K562 (cell line): ENCODE measurements at regions of chr21 and their contacts with region 1.

Region 1: DNA sequence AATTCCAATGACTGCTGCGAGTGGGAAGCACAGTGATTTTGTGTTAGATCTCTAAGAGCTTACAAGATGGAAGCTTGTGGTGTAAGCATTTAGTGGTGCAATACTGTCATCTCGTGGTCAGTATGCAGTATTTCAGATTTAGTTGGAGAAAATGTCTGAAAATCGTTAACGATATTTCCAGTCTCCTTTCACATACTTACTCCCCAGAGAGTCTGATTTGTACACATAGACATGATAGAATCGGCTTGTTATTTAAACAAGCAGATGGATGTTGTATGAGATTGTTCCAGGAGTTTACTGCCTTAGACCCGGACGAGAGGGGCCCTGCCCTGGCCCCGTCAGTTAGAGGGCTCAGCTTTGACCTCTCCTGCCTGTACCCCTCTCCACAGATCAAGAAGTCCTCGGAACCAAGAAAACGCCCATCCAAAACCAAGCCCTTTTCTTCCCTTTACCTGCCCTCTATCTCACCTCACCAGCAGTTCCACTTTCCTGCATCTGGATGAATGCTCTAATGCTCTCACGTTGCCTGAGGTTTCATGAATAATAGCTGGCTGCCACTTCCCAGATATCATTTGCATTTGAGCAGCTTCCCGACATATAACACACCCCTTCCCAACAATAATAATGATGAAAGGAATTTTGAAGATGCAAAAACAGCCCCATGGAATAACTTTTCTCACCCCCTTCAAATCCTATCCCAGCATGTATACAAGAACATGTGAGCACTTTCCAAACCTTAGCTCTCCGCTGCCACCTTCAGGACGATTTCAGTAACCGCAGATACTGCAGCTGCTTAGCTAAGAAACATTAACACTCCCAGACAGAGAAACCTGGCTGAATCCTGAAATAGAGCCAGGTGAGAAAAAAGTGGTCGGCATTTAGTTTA is 247.3 kb downstream of the LTN1 start:
- DNase-seq: peak; percentile 65 to 82 (median 78)
- ATAC-seq: peak; percentile 97
- H3K4me3 ChIP-seq: no peak overlapping the region
- H3K27ac ChIP-seq: no peak overlapping the region
- H3K4me1 ChIP-seq: no peaks in the 10 kb centered on the region
- H3K27me3 ChIP-seq: no peaks in the 10 kb centered on the region
- CTCF ChIP-seq: peak; percentile 84 to 99 (median 91)
- EP300 ChIP-seq: no peak
- POLR2A ChIP-seq: no peak
- RAD21 ChIP-seq: peak; percentile 97 to 99

Region 2: DNA sequence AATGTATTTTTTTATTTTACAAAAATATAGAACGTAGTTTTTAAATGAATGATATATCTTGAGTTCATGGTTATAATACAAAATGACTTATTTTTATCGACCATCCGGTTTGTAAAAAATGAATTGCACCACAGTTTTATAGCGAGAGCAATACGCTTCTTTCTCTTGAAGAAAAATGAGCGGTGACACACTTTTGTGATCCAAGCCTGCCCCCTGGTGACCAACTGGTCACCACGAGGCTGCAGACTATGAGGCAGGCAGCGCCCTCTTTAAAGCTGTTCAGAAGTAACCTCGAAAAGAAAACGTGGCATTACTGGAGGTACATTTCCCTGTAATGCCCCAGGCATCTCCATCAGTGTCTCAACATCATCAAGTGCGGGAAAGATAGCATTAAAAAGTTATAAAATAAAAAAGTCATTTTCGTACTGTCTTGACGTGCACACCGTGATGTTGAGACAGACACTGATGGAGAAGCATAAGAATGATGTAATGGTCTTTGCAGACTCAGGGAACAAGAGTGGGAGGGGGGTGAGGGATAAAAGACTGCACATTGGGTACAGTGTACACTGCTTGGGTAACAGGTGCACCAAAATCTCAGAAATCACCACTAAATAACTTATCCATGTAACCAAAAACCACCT is 1044.3 kb before region 1 on chr21:
- CTCF ChIA-PET with region 1: no interaction called
- POLR2A ChIA-PET with region 1: no interaction called
- in situ Hi-C with region 1: no loop called
- intact Hi-C with region 1: loop called (anchors 5 kb)
- DNase-seq: peak; percentile 34 to 65 (median 50)
- ATAC-seq: peak; percentile 68
- H3K4me3 ChIP-seq: no peak overlapping the region
- H3K27ac ChIP-seq: no peak overlapping the region
- H3K4me1 ChIP-seq: no peaks in the 10 kb centered on the region
- H3K27me3 ChIP-seq: no peaks in the 10 kb centered on the region
- CTCF ChIP-seq: peak; percentile 73 to 80 (median 75)
- EP300 ChIP-seq: no peak
- POLR2A ChIP-seq: no peak
- RAD21 ChIP-seq: peak; percentile 84 to 88

Region 3: GRCh38 chr21:28805885-28806284 is 60.5 kb after region 1 on chr21:
- CTCF ChIA-PET with region 1: no interaction called
- POLR2A ChIA-PET with region 1: no interaction called
- in situ Hi-C with region 1: no loop called
- intact Hi-C with region 1: no loop called
- DNase-seq: no peak
- ATAC-seq: no peak
- H3K4me3 ChIP-seq: no peak overlapping the region
- H3K27ac ChIP-seq: no peak overlapping the region
- H3K4me1 ChIP-seq: no peaks in the 10 kb centered on the region; a peak in 1 of 5 replicates
- H3K27me3 ChIP-seq: no peaks in the 10 kb centered on the region
- CTCF ChIP-seq: no peak
- EP300 ChIP-seq: no peak
- POLR2A ChIP-seq: no peak
- RAD21 ChIP-seq: no peak

Region 4: GRCh38 chr21:28818663-28819278 is 73.4 kb after region 1 on chr21:
- CTCF ChIA-PET with region 1: no interaction called
- POLR2A ChIA-PET with region 1: no interaction called
- in situ Hi-C with region 1: no loop called
- intact Hi-C with region 1: no loop called
- DNase-seq: no peak
- ATAC-seq: no peak
- H3K4me3 ChIP-seq: no peak overlapping the region
- H3K27ac ChIP-seq: no peak overlapping the region
- H3K4me1 ChIP-seq: no peaks in the 10 kb centered on the region
- H3K27me3 ChIP-seq: no peaks in the 10 kb centered on the region
- CTCF ChIP-seq: no peak
- EP300 ChIP-seq: no peak
- POLR2A ChIP-seq: no peak
- RAD21 ChIP-seq: no peak

Region 5: DNA sequence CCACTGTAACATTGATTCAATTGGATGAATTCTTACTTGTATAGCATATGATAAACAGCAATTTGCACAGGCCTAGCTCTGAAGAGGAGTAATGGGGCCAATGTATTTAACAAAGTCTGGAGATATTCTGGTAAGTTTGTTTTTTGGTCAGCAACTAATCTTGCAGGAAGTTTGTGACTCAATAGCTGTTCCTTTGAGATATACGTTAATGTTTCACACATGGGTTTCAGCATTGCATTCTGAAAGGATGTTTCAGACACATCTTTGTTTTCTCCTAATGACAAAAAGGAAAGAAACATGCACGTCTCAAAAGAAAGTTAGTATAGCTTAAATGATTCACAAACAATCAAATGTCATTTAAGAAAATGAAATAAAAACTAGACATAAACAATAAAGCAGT is 198.3 kb after region 1 on chr21:
- CTCF ChIA-PET with region 1: interaction called, 3 read pairs
- POLR2A ChIA-PET with region 1: no interaction called
- in situ Hi-C with region 1: no loop called
- intact Hi-C with region 1: loop called (anchors 1 kb)
- DNase-seq: no peak
- ATAC-seq: no peak
- H3K4me3 ChIP-seq: no peak overlapping the region
- H3K27ac ChIP-seq: no peak overlapping the region
- H3K4me1 ChIP-seq: no peaks in the 10 kb centered on the region
- H3K27me3 ChIP-seq: no peaks in the 10 kb centered on the region
- CTCF ChIP-seq: no peak
- EP300 ChIP-seq: no peak
- POLR2A ChIP-seq: no peak
- RAD21 ChIP-seq: no peak